Thyroid gland (tissue), 4 donors: ENCODE measurements at regions of chr2 and their contacts with region 1.

Region 1: DNA sequence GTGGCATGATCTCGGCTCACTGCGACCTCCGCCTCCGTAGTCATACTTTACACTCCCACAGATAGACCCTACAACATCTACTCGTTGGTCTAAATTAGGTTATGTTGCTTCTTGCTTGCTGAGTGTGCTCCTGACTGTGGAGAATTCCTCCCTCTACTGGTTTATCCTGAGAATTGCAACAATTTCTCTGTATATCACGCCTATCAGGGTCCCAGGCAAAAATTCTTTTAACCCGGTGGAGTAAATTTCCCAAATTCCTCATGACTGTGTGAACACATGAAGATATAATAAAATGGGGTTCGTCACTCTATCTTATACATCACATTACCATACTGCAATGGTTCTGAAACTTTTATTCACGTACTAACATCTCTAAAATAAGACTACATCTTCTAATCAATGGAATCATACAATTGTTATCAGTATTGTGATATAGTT is 156.7 kb downstream of the EVA1A start:
- DNase-seq: no peak
- H3K4me3 ChIP-seq: no peak overlapping the region
- H3K27ac ChIP-seq: no peak overlapping the region
- H3K4me1 ChIP-seq: no peaks in the 10 kb centered on the region
- H3K27me3 ChIP-seq: no peaks in the 10 kb centered on the region
- CTCF ChIP-seq: peak in 5 of 6 experiments; percentile 42 to 78 (median 69)
- POLR2A ChIP-seq: no peak

Region 2: DNA sequence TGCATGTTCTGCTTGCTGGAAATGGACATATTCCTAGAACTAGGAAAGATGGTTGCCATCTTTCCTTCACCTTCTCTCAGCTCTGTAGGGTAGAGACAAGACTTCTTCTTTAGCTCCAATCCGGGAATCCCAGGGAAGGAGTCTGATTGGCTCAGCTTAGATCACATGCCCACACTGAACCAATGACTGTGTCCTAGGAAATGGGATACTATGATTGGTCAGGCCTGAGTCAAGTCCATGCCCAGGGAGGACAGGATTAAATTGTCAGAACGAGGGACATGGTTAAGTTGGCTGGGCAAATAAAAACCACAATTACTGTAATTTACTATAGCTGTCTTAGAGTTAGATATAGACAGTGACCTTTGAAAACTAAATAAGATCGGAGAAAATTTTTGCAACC is 718.6 kb before region 1 on chr2:
- intact Hi-C with region 1: loop called (anchors 5 kb)
- DNase-seq: no peak
- H3K4me3 ChIP-seq: no peak overlapping the region
- H3K27ac ChIP-seq: no peak overlapping the region
- H3K4me1 ChIP-seq: no peaks in the 10 kb centered on the region
- H3K27me3 ChIP-seq: no peaks in the 10 kb centered on the region
- CTCF ChIP-seq: no peak
- POLR2A ChIP-seq: no peak

Region 3: GRCh38 chr2:74919827-74920226 is 484.2 kb before region 1 on chr2:
- intact Hi-C with region 1: loop called (anchors 5 kb)
- DNase-seq: peak; percentile 50 to 69
- H3K4me3 ChIP-seq: peak overlapping the region in 1 of 3 donors; percentile 23
- H3K27ac ChIP-seq: no peak overlapping the region
- H3K4me1 ChIP-seq: peaks cover 0 to 8% of the 10 kb centered on the region in 2 donors
- H3K27me3 ChIP-seq: no peaks in the 10 kb centered on the region
- CTCF ChIP-seq: peak; percentile 59 to 93 (median 76)
- POLR2A ChIP-seq: no peak